Right ventricle myocardium superior (tissue), 1 donor: ENCODE measurements at regions of chr6 and their contacts with region 1.

Region 1: DNA sequence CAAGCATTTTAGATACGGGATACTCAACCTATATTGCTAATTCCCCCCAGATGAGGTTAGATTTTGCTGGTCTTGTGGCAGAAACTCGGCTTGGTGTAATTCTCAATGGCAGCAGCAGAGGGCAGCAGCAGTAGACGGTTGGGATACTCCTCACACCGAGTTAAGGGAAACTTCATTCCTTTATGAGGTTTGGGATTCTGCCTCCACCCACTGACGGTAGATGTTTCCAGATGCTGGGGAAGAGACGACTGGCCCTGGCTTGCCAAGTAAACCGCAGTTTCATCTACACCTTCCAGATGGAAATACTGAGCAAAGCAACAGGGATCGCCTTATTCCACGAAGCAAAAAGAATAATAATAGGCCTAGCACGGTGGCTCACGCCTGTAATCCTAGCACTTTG is 8.2 kb upstream of the TBC1D7 start:
- DNase-seq: peak; percentile 89
- ATAC-seq: peak; percentile 79

Region 2: DNA sequence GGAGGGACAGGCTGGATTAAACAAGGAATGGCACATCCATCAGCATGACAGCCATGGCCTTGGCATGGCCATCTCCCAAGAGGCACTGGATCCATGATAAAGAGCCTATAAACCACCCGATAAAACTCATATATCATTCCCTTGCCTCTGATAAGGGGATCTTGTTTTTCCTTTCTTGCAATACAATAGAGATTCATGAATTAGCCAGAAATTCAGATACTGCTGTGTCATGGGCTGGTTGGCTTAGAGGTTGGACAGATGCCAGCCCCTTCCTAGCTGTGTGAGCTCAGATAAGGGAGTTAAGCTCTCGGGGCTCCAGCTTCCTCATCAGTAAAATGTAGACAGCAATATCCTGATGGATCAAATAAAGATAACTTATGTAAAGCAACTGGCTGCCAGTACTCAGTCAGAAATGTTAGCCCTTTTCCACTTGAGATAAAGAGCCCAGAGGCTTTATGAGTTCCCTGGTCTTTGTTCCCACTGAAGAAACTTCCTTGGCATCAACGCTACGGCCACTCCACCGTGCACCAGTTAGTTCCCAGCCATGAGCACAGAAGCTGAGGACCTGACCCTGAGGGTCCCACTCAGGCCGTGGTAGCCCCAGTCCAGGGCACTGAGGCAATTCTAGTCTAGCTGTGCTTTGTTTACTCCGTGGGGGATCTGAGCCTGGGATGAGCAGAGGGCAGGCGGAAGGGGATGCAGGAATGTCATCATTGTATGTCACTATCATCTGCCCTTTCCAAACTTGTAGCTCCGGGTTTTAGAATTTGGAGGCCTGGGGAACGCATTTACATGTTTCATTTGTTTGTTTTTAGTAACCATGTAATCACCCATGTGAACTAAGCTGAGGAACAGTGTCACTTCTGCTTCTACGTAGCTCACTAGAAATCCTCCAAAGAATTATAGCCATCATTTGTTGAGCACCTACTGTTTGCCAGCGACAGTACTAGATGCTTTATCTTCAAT is 59.0 kb after region 1 on chr6:
- intact Hi-C with region 1: loop called (anchors 5 kb)
- DNase-seq: peak; percentile 81
- ATAC-seq: peak; percentile 78